ENCODE measurements at regions of chr7 and their contacts with region 1.

Region 1: GRCh38 chr7:33895025-33895804 is 10.1 kb upstream of the BMPER start:
- DNase-seq: peak; percentile 90
- H3K4me3 ChIP-seq: no peak overlapping the region
- H3K27ac ChIP-seq: no peak overlapping the region
- H3K4me1 ChIP-seq: peaks cover 0 to 8% (median 4%) of the 10 kb centered on the region in 4 donors
- H3K27me3 ChIP-seq: no peaks in the 10 kb centered on the region
- CTCF ChIP-seq: peak; percentile 62 to 93 (median 84)
- EP300 ChIP-seq: no peak
- POLR2A ChIP-seq: no peak

Region 2: DNA sequence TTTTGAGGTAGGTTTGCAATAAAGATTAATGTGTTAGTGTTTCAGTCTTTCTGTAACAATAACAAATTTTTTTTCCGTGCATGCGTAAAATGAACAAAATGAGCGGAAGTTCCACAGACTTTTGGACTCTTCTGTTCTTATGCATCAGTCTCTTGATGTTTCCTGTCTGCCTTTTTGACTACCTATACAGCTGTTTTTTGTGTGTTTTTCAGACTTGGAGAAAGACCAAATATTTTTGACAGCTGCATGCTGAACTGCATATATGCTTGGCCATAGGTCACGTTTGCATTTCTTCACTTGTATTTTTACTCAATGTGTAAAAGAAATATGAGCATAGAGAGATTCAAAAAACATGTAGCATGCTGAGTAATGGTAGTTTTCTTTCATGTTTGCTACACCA is 646.5 kb before region 1 on chr7:
- intact Hi-C with region 1: loop called (anchors 5 kb)
- DNase-seq: no peak
- H3K4me3 ChIP-seq: no peak overlapping the region
- H3K27ac ChIP-seq: no peak overlapping the region
- H3K4me1 ChIP-seq: peaks cover 0 to 37% (median 28%) of the 10 kb centered on the region in 4 donors
- H3K27me3 ChIP-seq: no peaks in the 10 kb centered on the region
- CTCF ChIP-seq: no peak
- EP300 ChIP-seq: no peak
- POLR2A ChIP-seq: no peak

Region 3: DNA sequence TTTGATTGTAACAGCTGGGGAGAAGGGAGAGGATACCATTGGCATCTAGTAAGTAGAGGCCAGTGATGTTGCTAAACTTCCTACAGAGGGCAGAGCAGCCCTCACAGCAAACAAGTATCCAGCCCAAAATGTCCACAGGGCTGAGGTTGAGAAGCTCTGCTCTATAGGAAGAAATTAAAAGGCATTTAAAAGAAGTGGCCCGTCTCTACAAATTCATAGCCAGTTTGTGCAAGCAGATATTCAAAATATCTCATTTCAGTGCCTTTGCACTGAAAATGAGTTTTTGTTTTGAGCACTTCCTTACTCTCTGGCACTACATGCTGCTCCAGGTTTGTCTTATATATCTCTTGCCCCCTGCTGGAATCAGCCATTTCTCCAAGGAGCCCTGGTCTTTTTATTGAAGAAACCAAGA is 435.9 kb before region 1 on chr7:
- intact Hi-C with region 1: loop called (anchors 10 kb)
- DNase-seq: no peak
- H3K4me3 ChIP-seq: no peak overlapping the region
- H3K27ac ChIP-seq: no peak overlapping the region
- H3K4me1 ChIP-seq: peaks cover 0 to 19% (median 8%) of the 10 kb centered on the region in 4 donors
- H3K27me3 ChIP-seq: no peaks in the 10 kb centered on the region
- CTCF ChIP-seq: peak in 2 of 4 experiments; percentile 20 to 32
- EP300 ChIP-seq: no peak
- POLR2A ChIP-seq: no peak

Region 4: GRCh38 chr7:33757562-33758165 is 137.6 kb before region 1 on chr7:
- intact Hi-C with region 1: loop called (anchors 1 kb)
- DNase-seq: no peak
- H3K4me3 ChIP-seq: no peak overlapping the region
- H3K27ac ChIP-seq: no peak overlapping the region
- H3K4me1 ChIP-seq: peaks cover 0 to 8% (median 7%) of the 10 kb centered on the region in 4 donors
- H3K27me3 ChIP-seq: no peaks in the 10 kb centered on the region
- CTCF ChIP-seq: peak in 3 of 4 experiments; percentile 41 to 76 (median 69)
- EP300 ChIP-seq: no peak
- POLR2A ChIP-seq: no peak

Region 5: GRCh38 chr7:33807779-33808482 is 87.3 kb before region 1 on chr7:
- intact Hi-C with region 1: no loop called
- DNase-seq: no peak
- H3K4me3 ChIP-seq: no peak overlapping the region
- H3K27ac ChIP-seq: peak overlapping the region in 1 of 4 donors; percentile 1
- H3K4me1 ChIP-seq: peaks cover 0 to 37% (median 17%) of the 10 kb centered on the region in 4 donors
- H3K27me3 ChIP-seq: no peaks in the 10 kb centered on the region
- CTCF ChIP-seq: no peak
- EP300 ChIP-seq: no peak
- POLR2A ChIP-seq: no peak

Region 6: GRCh38 chr7:34361663-34362250 is 466.5 kb after region 1 on chr7:
- intact Hi-C with region 1: no loop called
- DNase-seq: no peak
- H3K4me3 ChIP-seq: no peak overlapping the region
- H3K27ac ChIP-seq: no peak overlapping the region
- H3K4me1 ChIP-seq: no peaks in the 10 kb centered on the region
- H3K27me3 ChIP-seq: no peaks in the 10 kb centered on the region
- CTCF ChIP-seq: no peak
- EP300 ChIP-seq: no peak
- POLR2A ChIP-seq: no peak

Measured in sigmoid colon (tissue), 7 donors.